Activated B cell treated with CpG ODN at 0.5 μM for 24 hours (primary cell): ENCODE measurements at regions of chr4 and their contacts with region 1.

Region 1: GRCh38 chr4:2220016-2220630 is 21.8 kb downstream of the HAUS3 start:
- DNase-seq: peak; percentile 62
- ATAC-seq: peak; percentile 97
- H3K4me3 Mint-ChIP-seq: no peak overlapping the region
- H3K27ac Mint-ChIP-seq: no peak overlapping the region
- H3K4me1 Mint-ChIP-seq: peaks cover 4% of the 10 kb centered on the region
- H3K27me3 Mint-ChIP-seq: no peaks in the 10 kb centered on the region
- CTCF ChIP-seq: peak; percentile 94

Region 2: GRCh38 chr4:1890979-1891570 is 329.0 kb before region 1 on chr4:
- CTCF ChIA-PET with region 1: no interaction called
- POLR2A ChIA-PET with region 1: no interaction called
- intact Hi-C with region 1: no loop called
- DNase-seq: no peak
- ATAC-seq: no peak
- H3K4me3 Mint-ChIP-seq: no peak overlapping the region
- H3K27ac Mint-ChIP-seq: no peak overlapping the region
- H3K4me1 Mint-ChIP-seq: peaks cover 8% of the 10 kb centered on the region
- H3K27me3 Mint-ChIP-seq: no peaks in the 10 kb centered on the region
- CTCF ChIP-seq: no peak

Region 3: DNA sequence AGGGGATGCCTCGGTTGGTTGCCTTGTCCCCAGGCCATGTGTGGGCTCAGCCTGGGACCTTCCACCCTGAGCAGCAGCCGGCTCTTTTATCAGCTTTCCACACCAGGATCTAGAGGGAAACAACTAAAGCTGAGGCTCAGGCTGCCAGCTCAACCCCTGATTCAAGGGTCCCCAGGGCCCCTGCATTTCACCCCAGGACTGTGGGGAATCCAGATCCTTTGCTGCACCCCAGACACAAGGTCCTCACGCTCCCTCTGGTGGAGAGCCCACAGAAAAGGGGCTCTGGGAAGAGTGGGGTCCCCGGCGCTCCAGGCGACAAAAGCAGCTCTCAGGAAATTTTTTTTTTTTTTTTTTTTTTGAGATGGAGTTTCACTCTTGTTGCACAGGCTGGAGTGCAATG is 134.0 kb after region 1 on chr4:
- CTCF ChIA-PET with region 1: interaction called, 15 read pairs
- POLR2A ChIA-PET with region 1: no interaction called
- intact Hi-C with region 1: loop called (anchors 1 kb)
- DNase-seq: no peak
- ATAC-seq: peak; percentile 35
- H3K4me3 Mint-ChIP-seq: no peak overlapping the region
- H3K27ac Mint-ChIP-seq: peak overlapping the region; percentile 56
- H3K4me1 Mint-ChIP-seq: peaks cover 12% of the 10 kb centered on the region
- H3K27me3 Mint-ChIP-seq: no peaks in the 10 kb centered on the region
- CTCF ChIP-seq: no peak

Region 4: DNA sequence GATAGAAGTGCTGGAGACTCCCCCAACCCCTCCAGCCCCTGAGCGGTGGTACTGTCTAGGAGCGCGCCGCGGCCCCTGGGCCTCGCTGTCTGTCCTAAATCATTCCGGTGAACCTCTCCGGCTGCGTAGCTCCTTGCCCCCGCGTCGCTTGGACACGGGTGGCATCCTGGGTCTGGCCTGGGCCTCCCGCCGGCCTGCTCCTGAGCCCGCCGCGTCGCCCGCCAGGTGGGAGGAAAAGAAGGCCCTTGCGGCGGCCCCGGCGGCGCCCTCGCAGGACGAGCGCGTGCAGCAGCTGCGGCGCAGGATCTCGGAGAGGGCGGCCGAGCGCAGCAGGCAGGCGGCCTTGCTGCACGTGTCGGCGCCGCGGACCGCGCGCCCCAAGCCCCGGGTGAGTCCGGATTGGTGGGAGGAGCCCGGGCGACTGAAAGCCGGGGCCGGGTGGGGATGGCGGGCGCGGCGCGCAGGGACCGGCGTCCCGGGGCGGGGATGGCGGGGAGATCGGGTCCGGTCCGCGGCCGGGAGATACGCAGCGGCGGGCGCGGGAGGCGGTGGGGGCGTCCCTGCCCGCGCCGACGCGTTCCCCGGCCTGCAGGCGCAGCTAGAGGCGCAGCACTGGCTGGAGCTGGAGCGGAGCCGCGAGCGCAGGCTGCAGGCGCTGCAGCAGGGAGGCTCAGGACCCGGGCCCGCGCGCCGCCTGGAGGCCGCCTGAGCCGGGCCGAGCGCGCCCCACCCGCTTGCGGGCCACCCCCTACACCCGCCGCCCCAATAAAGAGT is 242.3 kb after region 1 on chr4:
- CTCF ChIA-PET with region 1: interaction called, 17 read pairs
- POLR2A ChIA-PET with region 1: no interaction called
- intact Hi-C with region 1: loop called (anchors 1 kb)
- DNase-seq: peak; percentile 72
- ATAC-seq: peak; percentile 97
- H3K4me3 Mint-ChIP-seq: peak overlapping the region; percentile 77
- H3K27ac Mint-ChIP-seq: no peak overlapping the region
- H3K4me1 Mint-ChIP-seq: peaks cover 11% of the 10 kb centered on the region
- H3K27me3 Mint-ChIP-seq: peaks cover 4% of the 10 kb centered on the region
- CTCF ChIP-seq: no peak